ENCODE measurements at regions of chr10 and their contacts with region 1.

Region 1: GRCh38 chr10:91298224-91298871 is 77.9 kb downstream of the PCGF5 start:
- DNase-seq: no peak
- ATAC-seq: peak; percentile 93
- H3K4me3 ChIP-seq: peak overlapping the region; percentile 46; the same call in 1 of the 2 replicates
- H3K27ac ChIP-seq: no peak overlapping the region
- H3K4me1 ChIP-seq: peaks cover 5% of the 10 kb centered on the region; the same call in 1 of the 2 replicates
- H3K27me3 ChIP-seq: no peaks in the 10 kb centered on the region
- CTCF ChIP-seq: peak; percentile 90 to 97 (median 90)
- EP300 ChIP-seq: no peak
- POLR2A ChIP-seq: no peak
- RAD21 ChIP-seq: peak; percentile 93

Region 2: DNA sequence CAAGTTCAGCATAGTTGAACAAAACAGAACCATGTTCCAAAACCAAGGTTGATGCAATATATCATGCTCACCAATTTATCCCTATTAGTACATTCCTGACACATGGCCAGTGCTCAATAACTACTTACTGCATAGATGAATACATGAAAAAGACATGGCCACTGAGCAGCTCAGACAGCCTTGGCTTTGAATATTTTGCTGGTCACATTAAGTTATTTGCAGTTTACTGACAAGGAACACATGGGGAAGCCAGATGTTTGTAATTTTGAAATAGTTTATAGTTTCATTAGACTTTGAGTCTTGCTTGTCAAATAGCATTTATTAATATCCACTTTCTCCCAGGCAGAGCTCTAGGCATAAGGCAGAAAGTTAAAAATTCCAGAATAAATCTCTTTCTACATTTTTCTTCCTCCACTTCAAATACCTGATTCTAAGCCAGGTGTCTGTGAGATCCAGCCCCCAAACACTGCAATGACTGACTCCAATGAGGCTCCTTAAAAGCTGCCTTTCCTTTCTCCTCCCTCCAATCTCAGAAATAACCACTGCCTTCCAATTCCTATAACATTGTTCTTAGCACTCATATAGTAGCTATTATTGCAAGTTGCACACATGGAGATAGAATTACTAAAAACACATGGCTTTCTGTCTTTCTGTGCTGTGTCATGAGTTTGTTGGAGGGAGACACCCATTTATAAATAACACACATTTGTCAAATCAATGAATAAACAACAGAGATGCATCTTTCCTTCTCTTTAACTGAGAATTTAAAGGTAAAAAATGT is 13.4 kb after region 1 on chr10:
- CTCF ChIA-PET with region 1: interaction called, 17 read pairs
- POLR2A ChIA-PET with region 1: no interaction called
- RAD21 ChIA-PET with region 1: interaction called, 4 read pairs
- SMC1A ChIA-PET with region 1: interaction called, 10 read pairs
- in situ Hi-C with region 1: no loop called
- intact Hi-C with region 1: no loop called
- DNase-seq: no peak
- ATAC-seq: no peak
- H3K4me3 ChIP-seq: no peak overlapping the region
- H3K27ac ChIP-seq: no peak overlapping the region
- H3K4me1 ChIP-seq: no peaks in the 10 kb centered on the region
- H3K27me3 ChIP-seq: peaks cover 0 to 3% of the 10 kb centered on the region in 2 experiments; a peak in 2 of 4 replicates
- CTCF ChIP-seq: no peak
- EP300 ChIP-seq: no peak
- POLR2A ChIP-seq: no peak
- RAD21 ChIP-seq: no peak

Region 3: DNA sequence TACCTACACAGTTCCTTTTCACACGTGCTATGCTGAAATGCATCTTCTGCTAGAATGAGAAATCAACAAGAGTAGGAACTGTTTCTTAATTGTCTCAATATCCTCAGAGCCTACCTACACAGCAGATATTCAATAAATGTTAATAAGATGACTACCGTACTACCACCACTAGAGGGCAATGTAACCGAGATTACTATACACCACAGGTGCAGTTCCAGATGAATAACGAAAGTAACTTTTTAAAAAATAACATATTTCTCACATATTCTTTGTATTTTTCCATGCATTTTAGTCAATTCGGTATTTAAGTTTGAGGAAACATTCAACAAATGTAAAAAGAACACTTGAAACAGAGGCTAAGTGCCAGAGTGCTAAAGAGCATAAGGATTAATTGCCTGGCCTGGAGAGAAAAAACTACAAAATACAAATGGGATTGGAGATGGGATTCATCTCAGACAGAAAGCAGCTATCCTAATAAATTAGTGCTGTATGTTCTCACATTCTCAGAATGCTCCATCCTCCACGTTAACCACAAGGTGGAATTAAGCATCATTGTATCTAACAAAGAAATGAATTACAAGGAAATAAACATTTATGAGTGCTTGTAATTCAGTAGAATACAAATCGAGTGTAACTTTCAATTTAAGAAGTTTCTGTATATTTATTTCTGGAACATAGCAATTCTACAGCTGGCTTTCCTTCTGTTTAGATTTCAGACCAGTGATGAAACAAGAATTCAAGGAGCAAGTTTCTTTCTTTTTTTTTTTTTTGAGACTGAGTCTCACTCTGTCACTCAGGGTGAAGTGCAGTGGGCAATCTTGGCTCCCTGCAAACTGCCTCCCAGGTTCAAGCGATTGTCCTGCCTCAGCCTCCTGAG is 91.5 kb after region 1 on chr10:
- CTCF ChIA-PET with region 1: interaction called, 15 read pairs
- POLR2A ChIA-PET with region 1: no interaction called
- RAD21 ChIA-PET with region 1: interaction called, 4 read pairs
- SMC1A ChIA-PET with region 1: interaction called, 4 read pairs
- in situ Hi-C with region 1: no loop called
- intact Hi-C with region 1: loop called (anchors 2 kb)
- DNase-seq: no peak
- ATAC-seq: peak; percentile 97
- H3K4me3 ChIP-seq: no peak overlapping the region
- H3K27ac ChIP-seq: no peak overlapping the region
- H3K4me1 ChIP-seq: no peaks in the 10 kb centered on the region
- H3K27me3 ChIP-seq: peaks cover 0 to 2% of the 10 kb centered on the region in 2 experiments; a peak in 1 of 4 replicates
- CTCF ChIP-seq: peak; percentile 40 to 51 (median 50); a peak in 5 of 6 replicates
- EP300 ChIP-seq: no peak
- POLR2A ChIP-seq: no peak
- RAD21 ChIP-seq: peak; percentile 59

Region 4: GRCh38 chr10:91643700-91644099 is 345.4 kb after region 1 on chr10:
- CTCF ChIA-PET with region 1: no interaction called
- POLR2A ChIA-PET with region 1: no interaction called
- RAD21 ChIA-PET with region 1: no interaction called
- SMC1A ChIA-PET with region 1: no interaction called
- in situ Hi-C with region 1: loop called (anchors 5 kb)
- intact Hi-C with region 1: no loop called
- DNase-seq: no peak
- ATAC-seq: no peak
- H3K4me3 ChIP-seq: no peak overlapping the region
- H3K27ac ChIP-seq: no peak overlapping the region
- H3K4me1 ChIP-seq: no peaks in the 10 kb centered on the region
- H3K27me3 ChIP-seq: no peaks in the 10 kb centered on the region
- CTCF ChIP-seq: peak in 2 of 3 experiments; percentile 15 to 20; a peak in 1 of 6 replicates
- EP300 ChIP-seq: no peak
- POLR2A ChIP-seq: no peak
- RAD21 ChIP-seq: no peak

Region 5: GRCh38 chr10:91923371-91924211 is 625.2 kb after region 1 on chr10 and contains the start of gene BTAF1:
- CTCF ChIA-PET with region 1: no interaction called
- POLR2A ChIA-PET with region 1: no interaction called
- RAD21 ChIA-PET with region 1: no interaction called
- SMC1A ChIA-PET with region 1: no interaction called
- in situ Hi-C with region 1: loop called (anchors 5 kb)
- intact Hi-C with region 1: no loop called
- DNase-seq: peak; percentile 56
- ATAC-seq: peak; percentile 95
- H3K4me3 ChIP-seq: peak within 1 kb of the TSS; percentile 86
- H3K27ac ChIP-seq: peak within 1 kb of the TSS; percentile 88
- H3K4me1 ChIP-seq: no peaks in the 10 kb centered on the region
- H3K27me3 ChIP-seq: no peaks in the 10 kb centered on the region; a peak in 1 of 4 replicates
- CTCF ChIP-seq: no peak
- EP300 ChIP-seq: no peak
- POLR2A ChIP-seq: peak; percentile 95
- RAD21 ChIP-seq: no peak
- polyA plus RNA-seq, gene BTAF1: 11.8 to 12.8 TPM

Measured in GM12878 (cell line).